Sciatic nerve (tissue), 2 donors: ENCODE measurements at regions of chrX and their contacts with region 1.

Region 1: GRCh38 chrX:105945266-105945665 is 93.3 kb downstream of the SERPINA7 start:
- DNase-seq: no peak
- ATAC-seq: no peak

Region 2: DNA sequence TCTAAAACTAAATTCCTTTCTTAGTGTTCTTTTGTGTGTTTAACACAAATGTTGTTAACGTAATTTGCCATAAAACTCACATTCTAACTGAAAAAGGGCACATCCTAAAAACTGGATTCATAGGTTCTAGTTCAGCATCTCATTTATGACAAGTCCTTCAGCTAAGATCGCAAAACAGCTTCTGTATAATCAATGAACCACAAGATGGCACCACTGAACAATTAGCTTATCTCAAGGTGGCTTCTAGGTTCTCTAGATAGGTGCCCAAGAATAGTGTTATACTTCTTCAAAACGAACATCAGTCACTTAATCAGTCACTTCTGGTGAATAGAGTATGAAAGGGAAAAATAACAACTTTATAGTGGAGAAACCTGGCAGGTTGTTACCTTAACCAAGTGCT is 68.6 kb before region 1 on chrX:
- intact Hi-C with region 1: loop called (anchors 2 kb)
- DNase-seq: no peak
- ATAC-seq: no peak